ENCODE measurements at regions of chr2 and their contacts with region 1.

Region 1: GRCh38 chr2:195533771-195534642 is 123.0 kb upstream of the SLC39A10 start:
- DNase-seq: peak in 13 of 14 experiments; percentile 36 to 78 (median 55)
- ATAC-seq: peak; percentile 72
- H3K4me3 ChIP-seq: peak overlapping the region; percentile 54
- H3K4me3 Mint-ChIP-seq: peak overlapping the region; percentile 90
- H3K27ac ChIP-seq: peak overlapping the region; percentile 52 to 79
- H3K27ac Mint-ChIP-seq: peak overlapping the region; percentile 100
- H3K4me1 ChIP-seq: peaks cover 52% of the 10 kb centered on the region
- H3K4me1 Mint-ChIP-seq: peaks cover 86% of the 10 kb centered on the region
- H3K27me3 ChIP-seq: no peaks in the 10 kb centered on the region
- H3K27me3 Mint-ChIP-seq: no peaks in the 10 kb centered on the region
- CTCF ChIP-seq: no peak

Region 2: DNA sequence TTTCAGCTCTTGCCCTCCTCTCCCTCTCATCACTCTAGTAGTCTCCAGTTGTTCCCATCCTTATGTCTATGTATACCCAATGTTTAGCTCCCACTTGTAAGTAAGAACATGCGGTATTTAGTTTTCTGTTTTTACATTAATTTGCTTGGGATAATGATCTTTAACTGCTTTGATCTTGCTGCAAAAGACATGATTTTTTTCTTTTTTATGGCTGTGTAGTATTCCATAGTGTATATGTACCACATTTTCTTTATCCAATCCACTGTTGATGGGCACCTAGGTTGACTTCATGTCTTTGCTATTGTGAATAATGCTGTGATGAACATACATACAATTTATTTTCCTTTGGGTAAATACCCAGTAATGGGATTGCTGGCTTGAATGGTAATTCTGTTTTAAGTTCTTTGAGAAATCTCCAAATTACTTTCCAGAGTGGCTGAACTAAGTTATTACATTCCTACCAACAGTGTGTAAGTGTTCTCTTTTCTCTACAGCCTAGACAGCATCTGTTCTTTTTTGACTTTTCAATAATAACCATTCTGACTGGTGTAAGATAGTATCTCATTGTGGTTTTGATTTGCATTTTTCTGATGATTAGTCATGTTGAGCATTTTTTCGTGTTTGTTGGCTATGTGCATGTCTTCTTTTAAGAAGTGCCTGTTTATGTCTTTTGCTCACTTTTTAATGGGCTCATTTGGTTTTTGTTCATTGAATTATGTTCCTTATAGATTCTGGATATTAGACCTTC is 56.6 kb before region 1 on chr2:
- CTCF ChIA-PET with region 1: no interaction called
- POLR2A ChIA-PET with region 1: no interaction called
- intact Hi-C with region 1: no loop called
- DNase-seq: peak in 1 of 14 experiments; percentile 30
- ATAC-seq: peak; percentile 14
- H3K4me3 ChIP-seq: no peak overlapping the region
- H3K4me3 Mint-ChIP-seq: no peak overlapping the region
- H3K27ac ChIP-seq: no peak overlapping the region
- H3K27ac Mint-ChIP-seq: no peak overlapping the region
- H3K4me1 ChIP-seq: peaks cover 3% of the 10 kb centered on the region
- H3K4me1 Mint-ChIP-seq: peaks cover 13% of the 10 kb centered on the region
- H3K27me3 ChIP-seq: no peaks in the 10 kb centered on the region
- H3K27me3 Mint-ChIP-seq: no peaks in the 10 kb centered on the region
- CTCF ChIP-seq: no peak

Region 3: GRCh38 chr2:195498176-195498575 is 35.8 kb before region 1 on chr2:
- CTCF ChIA-PET with region 1: interaction called, 14 read pairs
- POLR2A ChIA-PET with region 1: interaction called, 32 read pairs
- intact Hi-C with region 1: loop called (anchors 5 kb)
- DNase-seq: peak; percentile 39 to 82 (median 60)
- ATAC-seq: peak; percentile 60
- H3K4me3 ChIP-seq: no peak overlapping the region
- H3K4me3 Mint-ChIP-seq: no peak overlapping the region
- H3K27ac ChIP-seq: no peak overlapping the region
- H3K27ac Mint-ChIP-seq: no peak overlapping the region
- H3K4me1 ChIP-seq: peaks cover 6% of the 10 kb centered on the region
- H3K4me1 Mint-ChIP-seq: peaks cover 41% of the 10 kb centered on the region
- H3K27me3 ChIP-seq: no peaks in the 10 kb centered on the region
- H3K27me3 Mint-ChIP-seq: no peaks in the 10 kb centered on the region
- CTCF ChIP-seq: peak; percentile 79

Region 4: GRCh38 chr2:195559431-195559914 is 25.5 kb after region 1 on chr2:
- CTCF ChIA-PET with region 1: interaction called, 7 read pairs
- POLR2A ChIA-PET with region 1: interaction called, 154 read pairs
- intact Hi-C with region 1: loop called (anchors 1 to 2 kb)
- DNase-seq: peak; percentile 45 to 95 (median 72)
- ATAC-seq: peak; percentile 86
- H3K4me3 ChIP-seq: peak overlapping the region; percentile 11
- H3K4me3 Mint-ChIP-seq: peak overlapping the region; percentile 65
- H3K27ac ChIP-seq: peak overlapping the region; percentile 66 to 69
- H3K27ac Mint-ChIP-seq: peak overlapping the region; percentile 94
- H3K4me1 ChIP-seq: peaks cover 74% of the 10 kb centered on the region
- H3K4me1 Mint-ChIP-seq: peaks cover 77% of the 10 kb centered on the region
- H3K27me3 ChIP-seq: no peaks in the 10 kb centered on the region
- H3K27me3 Mint-ChIP-seq: no peaks in the 10 kb centered on the region
- CTCF ChIP-seq: no peak

Region 5: DNA sequence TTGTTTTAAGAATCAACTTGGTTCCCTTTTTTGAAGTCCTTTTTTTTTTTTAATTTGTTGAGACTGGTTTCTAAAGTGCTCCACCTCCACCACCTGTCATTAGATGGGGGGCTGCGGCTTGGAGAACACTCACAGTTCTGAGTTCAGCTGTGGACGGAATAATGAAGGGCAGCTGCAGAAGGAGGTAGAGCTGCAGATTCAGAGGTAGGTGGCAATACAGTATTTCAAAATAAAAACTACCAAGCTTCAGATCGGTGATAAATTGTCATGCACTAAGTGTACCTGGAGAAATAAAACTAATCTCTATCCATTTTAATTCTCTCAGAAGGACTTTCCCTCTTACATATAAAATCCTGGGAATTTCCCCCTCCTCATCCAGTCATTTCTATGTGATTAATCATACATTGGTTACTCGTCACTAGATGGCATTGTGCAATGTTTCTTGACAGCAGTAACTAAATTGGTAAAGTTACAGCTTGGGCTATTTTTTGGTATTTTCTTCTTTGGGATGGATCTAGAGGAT is 41.9 kb after region 1 on chr2:
- CTCF ChIA-PET with region 1: no interaction called
- POLR2A ChIA-PET with region 1: interaction called, 7 read pairs
- intact Hi-C with region 1: loop called (anchors 5 kb)
- DNase-seq: peak in 3 of 14 experiments; percentile 45 to 68 (median 67)
- ATAC-seq: no peak
- H3K4me3 ChIP-seq: no peak overlapping the region
- H3K4me3 Mint-ChIP-seq: peak overlapping the region; percentile 42
- H3K27ac ChIP-seq: no peak overlapping the region
- H3K27ac Mint-ChIP-seq: peak overlapping the region; percentile 76
- H3K4me1 ChIP-seq: peaks cover 25% of the 10 kb centered on the region
- H3K4me1 Mint-ChIP-seq: peaks cover 74% of the 10 kb centered on the region
- H3K27me3 ChIP-seq: no peaks in the 10 kb centered on the region
- H3K27me3 Mint-ChIP-seq: no peaks in the 10 kb centered on the region
- CTCF ChIP-seq: no peak

Region 6: DNA sequence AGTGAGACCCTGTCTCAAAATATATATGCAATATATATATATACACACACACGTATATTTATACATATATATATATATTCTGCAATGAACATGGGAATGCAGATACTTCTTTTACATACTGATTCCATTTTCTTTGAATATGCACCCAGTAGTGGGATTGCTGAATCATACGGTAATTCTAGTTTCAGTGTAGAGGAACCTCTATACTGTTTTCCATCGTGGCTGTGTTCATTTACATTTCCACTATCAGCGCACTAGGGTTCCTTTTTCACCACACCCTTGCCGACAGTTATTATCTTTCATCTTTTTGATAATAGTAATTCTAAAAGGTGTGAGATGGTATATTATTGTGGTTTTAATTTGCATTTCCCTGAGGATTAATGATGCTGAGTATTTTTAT is 70.7 kb after region 1 on chr2:
- CTCF ChIA-PET with region 1: no interaction called
- POLR2A ChIA-PET with region 1: no interaction called
- intact Hi-C with region 1: no loop called
- DNase-seq: no peak
- ATAC-seq: no peak
- H3K4me3 ChIP-seq: no peak overlapping the region
- H3K4me3 Mint-ChIP-seq: no peak overlapping the region
- H3K27ac ChIP-seq: no peak overlapping the region
- H3K27ac Mint-ChIP-seq: no peak overlapping the region
- H3K4me1 ChIP-seq: no peaks in the 10 kb centered on the region
- H3K4me1 Mint-ChIP-seq: peaks cover 11% of the 10 kb centered on the region
- H3K27me3 ChIP-seq: no peaks in the 10 kb centered on the region
- H3K27me3 Mint-ChIP-seq: no peaks in the 10 kb centered on the region
- CTCF ChIP-seq: no peak

Region 7: DNA sequence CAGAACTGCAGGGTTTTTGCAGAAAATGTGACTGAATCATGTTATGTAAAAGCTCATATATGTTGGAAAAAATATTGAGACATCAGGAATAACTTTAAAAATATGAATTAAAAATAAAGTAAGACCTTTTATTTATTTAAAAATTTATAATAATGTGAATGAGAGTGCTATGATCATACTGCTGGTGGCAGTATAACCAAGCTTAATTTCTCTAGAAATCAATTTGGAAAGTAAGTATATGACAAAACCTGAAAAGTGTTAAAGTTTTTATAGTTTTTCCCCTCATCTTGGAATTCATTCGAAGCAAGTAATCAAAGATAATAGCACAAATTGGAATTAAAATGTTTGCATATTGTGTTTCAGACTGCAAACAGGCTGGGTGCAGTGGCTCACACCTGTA is 130.5 kb after region 1 on chr2:
- CTCF ChIA-PET with region 1: interaction called, 28 read pairs
- POLR2A ChIA-PET with region 1: interaction called, 225 read pairs
- intact Hi-C with region 1: no loop called
- DNase-seq: no peak
- ATAC-seq: no peak
- H3K4me3 ChIP-seq: no peak overlapping the region
- H3K4me3 Mint-ChIP-seq: no peak overlapping the region
- H3K27ac ChIP-seq: no peak overlapping the region
- H3K27ac Mint-ChIP-seq: peak overlapping the region; percentile 86
- H3K4me1 ChIP-seq: peaks cover 16% of the 10 kb centered on the region
- H3K4me1 Mint-ChIP-seq: peaks cover 76% of the 10 kb centered on the region
- H3K27me3 ChIP-seq: no peaks in the 10 kb centered on the region
- H3K27me3 Mint-ChIP-seq: no peaks in the 10 kb centered on the region
- CTCF ChIP-seq: peak; percentile 25

Region 8: GRCh38 chr2:196046123-196046917 is 512.3 kb after region 1 on chr2:
- CTCF ChIA-PET with region 1: no interaction called
- POLR2A ChIA-PET with region 1: no interaction called
- intact Hi-C with region 1: no loop called
- DNase-seq: no peak
- ATAC-seq: no peak
- H3K4me3 ChIP-seq: no peak overlapping the region
- H3K4me3 Mint-ChIP-seq: no peak overlapping the region
- H3K27ac ChIP-seq: no peak overlapping the region
- H3K27ac Mint-ChIP-seq: no peak overlapping the region
- H3K4me1 ChIP-seq: no peaks in the 10 kb centered on the region
- H3K4me1 Mint-ChIP-seq: no peaks in the 10 kb centered on the region
- H3K27me3 ChIP-seq: no peaks in the 10 kb centered on the region
- H3K27me3 Mint-ChIP-seq: peaks cover 19% of the 10 kb centered on the region
- CTCF ChIP-seq: no peak

Measured in CD4-positive, alpha-beta T cell (primary cell).